MCF 10A (cell line): ENCODE measurements at regions of chr6 and their contacts with region 1.

Region 1: GRCh38 chr6:136792410-136793262 is at the start of gene MAP3K5:
- DNase-seq: peak; percentile 93
- H3K4me3 Mint-ChIP-seq: peak within 1 kb of the TSS; percentile 92
- H3K27ac Mint-ChIP-seq: peak within 1 kb of the TSS; percentile 98
- H3K4me1 Mint-ChIP-seq: peaks cover 17% of the 10 kb centered on the region
- H3K27me3 Mint-ChIP-seq: no peaks in the 10 kb centered on the region
- CTCF ChIP-seq: peak; percentile 65
- total RNA-seq, gene MAP3K5: 7.6 and 8.4 TPM in 2 replicates

Region 2: DNA sequence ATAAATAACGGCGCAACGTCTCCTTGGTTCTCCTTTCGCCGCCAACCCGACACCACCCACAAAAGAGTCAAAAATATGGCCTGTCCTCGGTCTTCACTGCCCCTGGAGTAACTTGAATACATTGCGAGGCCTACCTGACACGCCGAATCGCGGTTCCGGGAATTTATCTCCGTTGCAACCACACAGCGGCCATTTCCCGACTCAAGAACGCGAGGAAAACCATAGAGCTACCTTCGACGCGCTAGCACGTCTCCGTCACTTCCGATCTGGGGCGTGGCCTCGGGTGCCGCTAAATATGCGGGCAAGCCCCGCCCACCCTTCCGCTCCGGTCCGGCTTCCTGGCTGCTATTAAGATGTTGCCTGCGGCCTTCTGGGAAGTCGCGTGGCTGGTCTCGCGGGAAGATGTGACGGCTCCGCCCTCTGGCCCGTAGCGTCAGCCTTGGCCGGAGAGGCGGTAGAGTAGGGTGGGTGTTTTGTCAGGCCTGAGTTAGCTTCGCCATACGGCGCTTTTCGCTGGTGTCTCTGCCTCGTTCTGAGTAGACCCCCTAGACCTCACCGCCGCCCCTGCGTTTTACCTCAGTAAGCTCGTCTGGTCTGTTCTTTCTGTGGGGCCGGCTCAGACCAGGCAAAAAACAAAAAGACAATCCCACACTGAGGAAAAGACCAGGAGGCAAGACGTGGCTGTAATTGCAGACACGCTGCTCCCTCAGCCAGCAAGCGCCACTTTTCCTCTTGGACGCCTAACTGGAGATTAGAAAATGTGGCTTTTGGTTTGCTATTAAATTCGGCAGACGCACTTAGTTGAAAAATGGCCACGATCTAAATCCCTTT is 502.8 kb before region 1 on chr6 and contains the start of gene BCLAF1:
- CTCF ChIA-PET with region 1: interaction called, 4 read pairs
- POLR2A ChIA-PET with region 1: interaction called, 21 read pairs
- intact Hi-C with region 1: loop called (anchors 10 kb)
- DNase-seq: peak; percentile 98
- H3K4me3 Mint-ChIP-seq: peak within 1 kb of the TSS; percentile 96
- H3K27ac Mint-ChIP-seq: peak within 1 kb of the TSS; percentile 100
- H3K4me1 Mint-ChIP-seq: peaks cover 17% of the 10 kb centered on the region
- H3K27me3 Mint-ChIP-seq: no peaks in the 10 kb centered on the region
- CTCF ChIP-seq: no peak
- total RNA-seq, gene BCLAF1: 175 and 178 TPM in 2 replicates

Region 3: DNA sequence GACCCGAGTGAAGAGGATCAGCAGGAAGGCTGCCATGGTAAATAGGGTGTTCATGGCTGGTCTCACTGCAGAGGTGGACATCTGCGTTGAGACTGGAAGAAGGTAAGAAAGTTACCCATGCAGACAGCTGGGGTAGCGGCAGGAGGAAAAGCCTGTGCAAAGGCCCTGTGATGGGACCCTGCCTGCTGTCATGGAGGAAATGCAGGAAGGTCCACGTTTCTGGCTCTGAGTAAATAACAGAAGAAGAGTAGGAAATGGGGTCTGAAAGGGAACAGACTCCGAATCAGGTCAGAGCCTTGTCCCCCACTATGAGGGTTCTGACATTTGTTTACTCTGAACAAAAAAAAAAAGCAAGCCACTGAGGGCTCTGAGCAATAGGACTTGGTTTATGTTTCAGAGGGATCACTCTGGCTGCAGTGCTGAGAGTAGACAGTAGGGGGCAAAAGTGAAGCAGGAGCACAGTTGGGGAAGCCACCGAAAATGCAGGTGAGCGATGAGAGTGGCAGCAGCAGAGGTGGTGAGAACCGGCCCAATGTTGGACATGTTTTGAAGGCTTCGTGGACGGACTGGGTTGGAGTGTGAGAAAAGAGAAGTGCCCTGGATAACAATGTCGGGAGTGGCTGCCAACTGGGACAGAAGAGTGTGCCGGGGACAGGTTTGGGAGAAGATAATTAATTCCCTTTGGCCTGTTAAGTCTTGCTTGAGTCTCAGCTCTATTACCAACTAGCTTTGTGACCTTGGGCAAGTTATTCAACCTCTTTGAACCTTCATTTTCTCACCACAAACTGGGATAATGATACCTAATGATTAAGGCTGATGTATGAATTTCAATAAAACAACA is 184.5 kb before region 1 on chr6:
- CTCF ChIA-PET with region 1: interaction called, 11 read pairs
- POLR2A ChIA-PET with region 1: interaction called, 11 read pairs
- intact Hi-C with region 1: loop called (anchors 1 kb)
- DNase-seq: peak; percentile 91
- H3K4me3 Mint-ChIP-seq: peak overlapping the region; percentile 11
- H3K27ac Mint-ChIP-seq: peak overlapping the region; percentile 94
- H3K4me1 Mint-ChIP-seq: peaks cover 37% of the 10 kb centered on the region
- H3K27me3 Mint-ChIP-seq: no peaks in the 10 kb centered on the region
- CTCF ChIP-seq: peak; percentile 67

Region 4: GRCh38 chr6:136652656-136653055 is 140.0 kb before region 1 on chr6:
- CTCF ChIA-PET with region 1: interaction called, 309 read pairs
- POLR2A ChIA-PET with region 1: interaction called, 204 read pairs
- intact Hi-C with region 1: no loop called
- DNase-seq: no peak
- H3K4me3 Mint-ChIP-seq: no peak overlapping the region
- H3K27ac Mint-ChIP-seq: no peak overlapping the region
- H3K4me1 Mint-ChIP-seq: peaks cover 10% of the 10 kb centered on the region
- H3K27me3 Mint-ChIP-seq: no peaks in the 10 kb centered on the region
- CTCF ChIP-seq: no peak

Region 5: GRCh38 chr6:136685540-136686108 is 107.0 kb before region 1 on chr6:
- CTCF ChIA-PET with region 1: interaction called, 10 read pairs
- POLR2A ChIA-PET with region 1: interaction called, 28 read pairs
- intact Hi-C with region 1: no loop called
- DNase-seq: peak; percentile 82
- H3K4me3 Mint-ChIP-seq: no peak overlapping the region
- H3K27ac Mint-ChIP-seq: no peak overlapping the region
- H3K4me1 Mint-ChIP-seq: peaks cover 13% of the 10 kb centered on the region
- H3K27me3 Mint-ChIP-seq: no peaks in the 10 kb centered on the region
- CTCF ChIP-seq: no peak

Region 6: GRCh38 chr6:136772685-136773472 is 19.8 kb before region 1 on chr6:
- CTCF ChIA-PET with region 1: interaction called, 7 read pairs
- POLR2A ChIA-PET with region 1: interaction called, 60 read pairs
- intact Hi-C with region 1: no loop called
- DNase-seq: no peak
- H3K4me3 Mint-ChIP-seq: no peak overlapping the region
- H3K27ac Mint-ChIP-seq: no peak overlapping the region
- H3K4me1 Mint-ChIP-seq: peaks cover 23% of the 10 kb centered on the region
- H3K27me3 Mint-ChIP-seq: no peaks in the 10 kb centered on the region
- CTCF ChIP-seq: no peak

Region 7: GRCh38 chr6:136869451-136869850 is 76.8 kb after region 1 on chr6:
- CTCF ChIA-PET with region 1: no interaction called
- POLR2A ChIA-PET with region 1: no interaction called
- intact Hi-C with region 1: no loop called
- DNase-seq: no peak
- H3K4me3 Mint-ChIP-seq: no peak overlapping the region
- H3K27ac Mint-ChIP-seq: no peak overlapping the region
- H3K4me1 Mint-ChIP-seq: peaks cover 12% of the 10 kb centered on the region
- H3K27me3 Mint-ChIP-seq: no peaks in the 10 kb centered on the region
- CTCF ChIP-seq: no peak

Region 8: DNA sequence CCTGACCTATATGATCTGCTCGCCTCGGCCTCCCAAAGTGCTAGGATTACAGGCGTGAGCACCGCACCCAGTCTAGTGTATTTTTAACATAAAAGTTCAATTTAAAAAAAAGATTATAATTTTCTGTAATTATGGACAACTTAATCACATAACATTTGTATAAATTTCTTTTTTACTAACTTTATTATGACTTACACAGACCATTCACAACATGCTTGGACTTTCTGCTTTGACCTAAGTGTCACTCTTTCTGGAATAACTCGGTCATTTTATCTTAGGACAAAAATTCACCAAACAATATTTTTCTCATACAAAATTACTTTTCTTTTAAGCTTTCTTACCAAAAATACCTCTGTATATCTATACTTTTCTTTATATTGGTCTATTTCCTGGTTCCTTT is 396.2 kb after region 1 on chr6:
- CTCF ChIA-PET with region 1: no interaction called
- POLR2A ChIA-PET with region 1: no interaction called
- intact Hi-C with region 1: no loop called
- DNase-seq: peak; percentile 55
- H3K4me3 Mint-ChIP-seq: no peak overlapping the region
- H3K27ac Mint-ChIP-seq: no peak overlapping the region
- H3K4me1 Mint-ChIP-seq: no peaks in the 10 kb centered on the region
- H3K27me3 Mint-ChIP-seq: no peaks in the 10 kb centered on the region
- CTCF ChIP-seq: no peak